Prostate gland (tissue), 2 donors: ENCODE measurements at regions of chr13 and their contacts with region 1.

Region 1: GRCh38 chr13:24220086-24220703 is 59.7 kb downstream of the SPATA13 start:
- DNase-seq: peak; percentile 56
- H3K4me3 ChIP-seq: no peak overlapping the region
- H3K27ac ChIP-seq: no peak overlapping the region
- H3K4me1 ChIP-seq: peaks cover 6% of the 10 kb centered on the region
- H3K27me3 ChIP-seq: no peaks in the 10 kb centered on the region
- CTCF ChIP-seq: peak; percentile 46 to 85 (median 84)
- POLR2A ChIP-seq: no peak

Region 2: DNA sequence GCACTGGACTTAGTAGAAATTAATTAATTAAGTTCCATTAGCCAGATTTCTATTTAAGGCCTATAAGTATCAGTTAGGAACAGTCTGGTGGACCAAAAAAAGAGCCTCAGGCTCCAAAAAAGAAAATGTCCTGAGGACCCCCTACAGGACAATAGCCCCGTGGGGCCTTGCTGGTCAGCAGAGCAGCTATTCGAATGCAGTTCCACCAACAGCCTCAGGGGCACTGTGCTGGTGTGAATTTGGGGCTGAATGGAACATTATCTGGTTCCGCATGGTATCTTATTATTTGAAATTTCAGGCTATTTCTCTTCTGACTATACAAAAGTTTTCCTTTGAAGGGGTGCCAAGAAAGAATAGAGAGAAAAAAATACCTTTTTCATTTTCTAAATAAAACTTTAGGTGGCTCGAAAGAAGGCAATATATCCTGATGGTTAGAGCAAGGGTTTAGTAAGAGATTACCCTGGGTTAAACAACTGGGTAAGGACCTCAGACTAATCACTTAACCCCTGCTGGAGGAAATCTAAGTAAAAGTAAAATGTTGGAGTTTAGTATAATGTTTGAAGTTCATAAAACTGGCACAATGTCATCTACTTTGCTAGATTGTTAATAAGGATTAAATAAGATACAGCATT is 478.2 kb before region 1 on chr13:
- intact Hi-C with region 1: no loop called
- DNase-seq: no peak
- H3K4me3 ChIP-seq: no peak overlapping the region
- H3K27ac ChIP-seq: peak overlapping the region; percentile 6 to 67
- H3K4me1 ChIP-seq: peaks cover 6% of the 10 kb centered on the region
- H3K27me3 ChIP-seq: no peaks in the 10 kb centered on the region
- CTCF ChIP-seq: peak in 1 of 4 experiments; percentile 17
- POLR2A ChIP-seq: no peak

Region 3: GRCh38 chr13:24022568-24022967 is 197.6 kb before region 1 on chr13:
- intact Hi-C with region 1: loop called (anchors 2 kb)
- DNase-seq: no peak
- H3K4me3 ChIP-seq: no peak overlapping the region
- H3K27ac ChIP-seq: no peak overlapping the region
- H3K4me1 ChIP-seq: no peaks in the 10 kb centered on the region
- H3K27me3 ChIP-seq: no peaks in the 10 kb centered on the region
- CTCF ChIP-seq: no peak
- POLR2A ChIP-seq: no peak

Region 4: GRCh38 chr13:24053519-24054251 is 166.5 kb before region 1 on chr13:
- intact Hi-C with region 1: loop called (anchors 5 kb)
- DNase-seq: peak; percentile 67
- H3K4me3 ChIP-seq: no peak overlapping the region
- H3K27ac ChIP-seq: peak overlapping the region; percentile 24 to 47
- H3K4me1 ChIP-seq: peaks cover 9% of the 10 kb centered on the region
- H3K27me3 ChIP-seq: no peaks in the 10 kb centered on the region
- CTCF ChIP-seq: peak; percentile 26 to 83 (median 74)
- POLR2A ChIP-seq: no peak

Region 5: GRCh38 chr13:24168392-24168750 is 51.8 kb before region 1 on chr13:
- intact Hi-C with region 1: no loop called
- DNase-seq: no peak
- H3K4me3 ChIP-seq: no peak overlapping the region
- H3K27ac ChIP-seq: no peak overlapping the region
- H3K4me1 ChIP-seq: no peaks in the 10 kb centered on the region
- H3K27me3 ChIP-seq: no peaks in the 10 kb centered on the region
- CTCF ChIP-seq: no peak
- POLR2A ChIP-seq: no peak

Region 6: GRCh38 chr13:24489721-24490120 is 269.5 kb after region 1 on chr13:
- intact Hi-C with region 1: no loop called
- DNase-seq: no peak
- H3K4me3 ChIP-seq: no peak overlapping the region
- H3K27ac ChIP-seq: no peak overlapping the region
- H3K4me1 ChIP-seq: no peaks in the 10 kb centered on the region
- H3K27me3 ChIP-seq: no peaks in the 10 kb centered on the region
- CTCF ChIP-seq: no peak
- POLR2A ChIP-seq: no peak